Breast epithelium (tissue), 4 donors: ENCODE measurements at regions of chr17 and their contacts with region 1.

Region 1: DNA sequence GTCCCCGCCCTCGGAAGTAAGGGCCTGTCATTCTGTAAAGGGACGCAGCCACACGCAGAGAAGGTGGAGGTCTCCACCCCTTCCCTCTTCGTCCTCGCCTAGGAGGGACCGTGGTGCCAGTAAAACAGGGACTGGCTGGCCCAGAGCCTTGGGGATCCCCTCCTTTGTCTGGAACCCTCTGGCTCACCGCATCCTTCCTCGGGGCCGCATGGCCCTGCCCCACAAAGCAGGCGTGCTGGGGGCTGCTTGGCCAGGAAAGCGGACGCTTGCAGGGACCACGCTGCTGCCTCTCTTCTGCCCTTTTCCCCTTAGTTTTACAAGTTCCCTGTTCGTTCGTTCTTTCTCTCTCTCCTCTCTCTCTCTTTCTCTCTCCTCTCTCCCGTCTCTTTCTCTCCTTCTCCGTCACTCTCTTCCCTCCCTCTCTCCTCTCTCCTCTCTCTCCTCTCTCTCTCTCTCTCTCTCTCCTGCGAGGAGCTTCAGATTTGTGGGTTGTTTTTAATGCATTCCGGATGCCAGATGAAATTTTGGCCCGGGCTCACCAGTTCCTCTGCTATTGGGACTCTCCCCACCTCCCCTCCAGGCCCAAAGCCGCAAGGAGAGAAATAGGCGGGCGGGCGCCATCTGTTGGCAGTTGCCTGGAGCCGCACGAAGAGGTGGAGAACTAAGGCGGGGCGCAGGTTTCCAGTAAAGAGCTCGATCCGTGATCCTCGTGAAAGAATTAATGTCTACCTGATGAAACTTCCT is 35.1 kb upstream of the CDRT4 start:
- DNase-seq: peak; percentile 89 to 90
- H3K4me3 ChIP-seq: peak overlapping the region; percentile 36 to 56 (median 44)
- H3K27ac ChIP-seq: peak overlapping the region; percentile 72 to 83
- H3K4me1 ChIP-seq: no peaks in the 10 kb centered on the region
- H3K27me3 ChIP-seq: no peaks in the 10 kb centered on the region
- CTCF ChIP-seq: peak; percentile 75 to 94 (median 89)
- POLR2A ChIP-seq: no peak

Region 2: GRCh38 chr17:15260376-15261257 is 241.9 kb before region 1 on chr17:
- intact Hi-C with region 1: loop called (anchors 5 kb)
- DNase-seq: peak; percentile 74 to 88
- H3K4me3 ChIP-seq: peak overlapping the region; percentile 62 to 85 (median 72)
- H3K27ac ChIP-seq: peak overlapping the region; percentile 93 to 96
- H3K4me1 ChIP-seq: peaks cover 6 to 21% of the 10 kb centered on the region in 2 donors
- H3K27me3 ChIP-seq: no peaks in the 10 kb centered on the region
- CTCF ChIP-seq: peak in 1 of 3 donors; percentile 94
- POLR2A ChIP-seq: no peak

Region 3: GRCh38 chr17:15513058-15513858 is 10.7 kb after region 1 on chr17:
- intact Hi-C with region 1: no loop called
- DNase-seq: no peak
- H3K4me3 ChIP-seq: no peak overlapping the region
- H3K27ac ChIP-seq: peak overlapping the region; percentile 58 to 82
- H3K4me1 ChIP-seq: no peaks in the 10 kb centered on the region
- H3K27me3 ChIP-seq: no peaks in the 10 kb centered on the region
- CTCF ChIP-seq: no peak
- POLR2A ChIP-seq: no peak

Region 4: DNA sequence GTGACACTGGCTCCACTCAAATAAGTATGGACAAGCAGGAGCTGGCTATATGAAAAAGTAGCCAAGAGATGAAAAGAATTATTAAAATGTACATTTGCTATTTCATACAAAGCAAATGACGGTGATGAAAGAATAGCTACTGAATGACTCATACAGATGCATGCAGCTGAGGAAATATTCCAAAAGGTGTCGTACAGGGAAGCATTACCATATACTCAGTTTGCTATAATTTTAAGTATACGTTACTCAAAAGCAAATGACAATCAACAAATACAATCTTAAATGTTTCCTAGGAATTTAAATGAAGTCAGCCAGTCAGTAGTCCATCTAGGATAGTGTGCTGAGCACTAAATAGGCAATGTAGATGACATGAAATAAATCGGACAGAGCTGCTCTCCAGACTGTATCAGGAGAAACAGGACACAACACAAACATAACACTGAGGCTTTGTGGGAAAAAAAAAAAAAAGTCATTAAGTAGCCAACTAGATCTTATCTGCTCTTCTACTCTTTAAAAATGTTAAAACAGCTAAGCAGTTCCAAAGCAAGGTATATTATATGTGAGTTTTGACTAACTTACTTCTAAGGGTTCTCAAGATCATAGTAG is 647.8 kb after region 1 on chr17:
- intact Hi-C with region 1: loop called (anchors 10 kb)
- DNase-seq: no peak
- H3K4me3 ChIP-seq: no peak overlapping the region
- H3K27ac ChIP-seq: peak overlapping the region in 1 of 2 donors; percentile 41
- H3K4me1 ChIP-seq: no peaks in the 10 kb centered on the region
- H3K27me3 ChIP-seq: no peaks in the 10 kb centered on the region
- CTCF ChIP-seq: no peak
- POLR2A ChIP-seq: no peak